HAP-1 (cell line): ENCODE measurements at regions of chr18 and their contacts with region 1.

Region 1: GRCh38 chr18:56431551-56431950 is 206.8 kb downstream of the TXNL1 start:
- DNase-seq: no peak
- H3K4me3 ChIP-seq: no peak overlapping the region
- H3K4me1 ChIP-seq: peaks cover 12% of the 10 kb centered on the region
- H3K27me3 ChIP-seq: no peaks in the 10 kb centered on the region

Region 2: GRCh38 chr18:56124186-56124585 is 307.4 kb before region 1 on chr18:
- in situ Hi-C with region 1: no loop called
- DNase-seq: no peak
- H3K4me3 ChIP-seq: no peak overlapping the region
- H3K4me1 ChIP-seq: no peaks in the 10 kb centered on the region
- H3K27me3 ChIP-seq: peaks cover 7% of the 10 kb centered on the region; the same call in 1 of the 2 replicates

Region 3: DNA sequence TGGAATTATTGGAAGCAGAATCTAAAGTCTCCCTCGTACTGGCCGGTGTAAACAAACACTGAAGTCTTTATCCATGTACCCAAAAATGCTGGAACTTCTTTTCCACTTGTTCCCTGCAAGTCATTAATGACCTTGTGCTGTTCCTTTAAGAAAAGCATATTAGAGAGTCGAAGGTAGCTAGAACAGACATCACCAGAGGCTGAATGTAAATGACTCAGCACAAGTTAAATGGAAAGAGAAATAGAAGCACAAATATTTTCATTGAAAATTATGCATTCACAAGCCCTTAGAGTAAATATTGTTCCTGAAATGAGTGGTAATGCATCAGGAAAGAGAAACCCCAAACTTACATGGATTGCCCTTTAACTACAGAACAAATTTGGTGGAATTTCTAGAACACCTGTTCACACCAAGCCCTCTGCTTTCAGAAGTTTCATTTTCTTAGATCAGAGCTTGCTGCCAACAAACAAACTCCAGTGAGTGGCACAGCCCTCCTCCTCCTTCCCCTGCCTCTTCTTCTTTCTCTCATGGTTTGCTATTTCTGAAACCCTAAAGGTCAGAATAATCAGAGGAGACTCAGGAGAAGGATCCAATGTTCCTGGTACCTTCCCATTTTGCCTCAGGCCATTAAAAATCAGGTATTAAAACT is 57.4 kb before region 1 on chr18:
- in situ Hi-C with region 1: loop called (anchors 10 kb)
- DNase-seq: no peak
- H3K4me3 ChIP-seq: no peak overlapping the region
- H3K4me1 ChIP-seq: no peaks in the 10 kb centered on the region
- H3K27me3 ChIP-seq: no peaks in the 10 kb centered on the region